CD8-positive, alpha-beta T cell (primary cell): ENCODE measurements at regions of chr1 and their contacts with region 1.

Region 1: DNA sequence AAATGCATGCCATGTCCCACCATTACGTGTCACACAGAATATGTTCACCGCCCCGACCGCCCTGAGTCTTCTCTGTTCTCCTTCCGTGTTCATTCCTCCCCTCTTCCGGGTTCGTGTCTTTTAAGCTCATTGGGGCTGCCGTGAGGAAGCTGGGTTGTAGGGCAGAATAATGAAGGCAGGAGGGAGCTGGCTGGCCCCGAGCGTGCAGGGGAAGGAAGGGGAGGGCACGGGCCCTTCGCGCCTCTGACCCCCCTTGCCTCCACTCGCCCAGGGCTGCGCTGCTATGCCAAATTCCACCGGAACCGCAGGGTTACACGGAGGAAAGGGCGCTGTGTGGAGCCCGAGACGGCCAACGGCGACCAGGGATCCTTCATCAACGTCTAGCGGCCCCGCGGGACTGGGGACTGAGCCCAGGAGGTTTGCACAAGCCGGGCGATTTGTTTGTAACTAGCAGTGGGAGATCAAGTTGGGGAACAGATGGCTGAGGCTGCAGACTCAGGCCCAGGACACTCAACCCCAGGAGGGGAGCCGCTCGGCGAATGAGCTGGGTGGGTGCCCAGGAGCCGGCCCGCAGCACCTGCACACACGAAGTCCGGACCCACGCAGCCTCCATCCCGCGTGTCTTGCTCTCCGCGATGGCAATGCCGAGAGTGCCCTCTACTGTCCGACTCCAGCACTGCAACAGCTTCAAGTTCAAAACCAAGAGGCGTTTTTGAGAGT is 16.5 kb upstream of the AGTRAP start:
- DNase-seq: peak; percentile 73 to 94 (median 90)
- ATAC-seq: peak; percentile 87
- H3K4me3 ChIP-seq: peak overlapping the region; percentile 51 to 66
- H3K4me3 Mint-ChIP-seq: peak overlapping the region; percentile 88
- H3K27ac ChIP-seq: peak overlapping the region; percentile 52 to 74
- H3K27ac Mint-ChIP-seq: peak overlapping the region; percentile 91
- H3K4me1 ChIP-seq: peaks cover 15% of the 10 kb centered on the region
- H3K4me1 Mint-ChIP-seq: peaks cover 13% of the 10 kb centered on the region
- H3K27me3 ChIP-seq: no peaks in the 10 kb centered on the region
- H3K27me3 Mint-ChIP-seq: no peaks in the 10 kb centered on the region
- CTCF ChIP-seq: peak; percentile 96

Region 2: DNA sequence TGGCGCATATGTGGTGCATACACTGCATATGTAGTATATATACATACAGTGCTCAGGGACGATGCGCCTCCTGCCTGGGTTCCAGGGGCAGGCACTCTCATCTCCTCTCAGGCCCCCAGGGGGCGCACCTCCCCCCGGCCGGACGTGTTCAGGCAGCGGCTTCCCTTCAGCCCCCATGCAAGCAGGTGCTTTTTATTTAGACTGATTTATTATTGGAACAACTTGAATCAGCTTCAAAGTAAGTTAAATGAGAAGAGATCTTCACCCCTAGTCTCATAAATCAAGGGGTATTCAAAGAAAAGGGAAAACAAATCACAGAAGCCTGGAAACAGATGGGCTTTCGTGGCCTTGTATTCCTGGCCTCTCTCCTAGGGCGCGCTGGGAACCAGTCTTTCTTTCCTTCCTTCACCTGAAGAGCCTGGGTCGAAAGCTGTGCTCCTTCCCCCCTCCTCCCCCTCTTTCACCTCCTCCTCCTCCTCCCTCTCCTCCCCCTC is 381.8 kb before region 1 on chr1:
- CTCF ChIA-PET with region 1: no interaction called
- POLR2A ChIA-PET with region 1: no interaction called
- intact Hi-C with region 1: loop called (anchors 1 kb)
- DNase-seq: peak; percentile 47 to 85 (median 70)
- ATAC-seq: peak; percentile 74
- H3K4me3 ChIP-seq: no peak overlapping the region
- H3K4me3 Mint-ChIP-seq: no peak overlapping the region
- H3K27ac ChIP-seq: no peak overlapping the region
- H3K27ac Mint-ChIP-seq: no peak overlapping the region
- H3K4me1 ChIP-seq: peaks cover 6% of the 10 kb centered on the region
- H3K4me1 Mint-ChIP-seq: peaks cover 13% of the 10 kb centered on the region
- H3K27me3 ChIP-seq: no peaks in the 10 kb centered on the region
- H3K27me3 Mint-ChIP-seq: peaks cover 11% of the 10 kb centered on the region
- CTCF ChIP-seq: peak; percentile 83

Region 3: DNA sequence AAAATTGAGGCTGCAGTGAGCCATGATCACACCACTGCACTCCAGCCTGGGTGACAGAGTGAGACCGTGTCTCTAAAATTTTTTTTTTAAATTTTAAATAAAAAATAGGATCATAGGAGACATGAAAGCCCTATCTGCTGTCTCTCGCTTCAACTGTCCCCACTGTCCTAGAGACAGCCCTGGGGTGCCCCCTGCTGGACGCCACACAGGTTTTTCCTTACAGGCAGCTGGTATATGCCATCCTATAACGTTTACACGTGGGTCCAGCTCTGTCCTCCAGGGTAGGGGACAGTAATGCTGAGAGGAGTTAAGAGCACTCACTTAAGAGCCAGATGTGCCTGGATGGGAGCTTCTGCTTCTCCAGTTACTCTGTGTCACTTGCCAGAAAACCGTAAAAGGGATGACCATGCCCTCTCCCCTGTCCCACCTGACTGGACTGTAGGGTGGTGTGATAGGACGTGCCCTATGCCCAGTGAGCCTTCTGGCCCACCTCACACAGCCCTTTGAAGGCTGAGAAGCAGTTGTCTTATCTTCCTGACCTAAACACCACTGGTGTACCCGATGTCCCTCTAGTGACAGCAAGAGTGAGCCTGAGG is 73.7 kb before region 1 on chr1:
- CTCF ChIA-PET with region 1: interaction called, 69 read pairs
- POLR2A ChIA-PET with region 1: interaction called, 62 read pairs
- intact Hi-C with region 1: loop called (anchors 1 kb)
- DNase-seq: peak; percentile 57 to 85 (median 81)
- ATAC-seq: peak; percentile 47
- H3K4me3 ChIP-seq: no peak overlapping the region
- H3K4me3 Mint-ChIP-seq: no peak overlapping the region
- H3K27ac ChIP-seq: no peak overlapping the region
- H3K27ac Mint-ChIP-seq: no peak overlapping the region
- H3K4me1 ChIP-seq: peaks cover 17% of the 10 kb centered on the region
- H3K4me1 Mint-ChIP-seq: peaks cover 15% of the 10 kb centered on the region
- H3K27me3 ChIP-seq: no peaks in the 10 kb centered on the region
- H3K27me3 Mint-ChIP-seq: no peaks in the 10 kb centered on the region
- CTCF ChIP-seq: peak; percentile 85

Region 4: GRCh38 chr1:11661103-11661502 is 58.4 kb before region 1 on chr1:
- CTCF ChIA-PET with region 1: interaction called, 54 read pairs
- POLR2A ChIA-PET with region 1: interaction called, 38 read pairs
- intact Hi-C with region 1: loop called (anchors 1 kb)
- DNase-seq: no peak
- ATAC-seq: no peak
- H3K4me3 ChIP-seq: no peak overlapping the region
- H3K4me3 Mint-ChIP-seq: no peak overlapping the region
- H3K27ac ChIP-seq: no peak overlapping the region
- H3K27ac Mint-ChIP-seq: no peak overlapping the region
- H3K4me1 ChIP-seq: peaks cover 6% of the 10 kb centered on the region
- H3K4me1 Mint-ChIP-seq: peaks cover 5% of the 10 kb centered on the region
- H3K27me3 ChIP-seq: no peaks in the 10 kb centered on the region
- H3K27me3 Mint-ChIP-seq: no peaks in the 10 kb centered on the region
- CTCF ChIP-seq: no peak

Region 5: GRCh38 chr1:11707621-11708276 is 11.7 kb before region 1 on chr1:
- CTCF ChIA-PET with region 1: interaction called, 11 read pairs
- POLR2A ChIA-PET with region 1: no interaction called
- intact Hi-C with region 1: no loop called
- DNase-seq: no peak
- ATAC-seq: no peak
- H3K4me3 ChIP-seq: no peak overlapping the region
- H3K4me3 Mint-ChIP-seq: no peak overlapping the region
- H3K27ac ChIP-seq: no peak overlapping the region
- H3K27ac Mint-ChIP-seq: no peak overlapping the region
- H3K4me1 ChIP-seq: no peaks in the 10 kb centered on the region
- H3K4me1 Mint-ChIP-seq: no peaks in the 10 kb centered on the region
- H3K27me3 ChIP-seq: no peaks in the 10 kb centered on the region
- H3K27me3 Mint-ChIP-seq: no peaks in the 10 kb centered on the region
- CTCF ChIP-seq: no peak

Region 6: GRCh38 chr1:11735854-11736745 is 16.6 kb after region 1 on chr1 and contains the start of gene AGTRAP:
- CTCF ChIA-PET with region 1: interaction called, 8 read pairs
- POLR2A ChIA-PET with region 1: interaction called, 17 read pairs
- intact Hi-C with region 1: loop called in 1 of 2 experiments (anchors 2 kb)
- DNase-seq: peak; percentile 74 to 94 (median 86)
- ATAC-seq: peak; percentile 65
- H3K4me3 ChIP-seq: peak within 1 kb of the TSS; percentile 87 to 90
- H3K4me3 Mint-ChIP-seq: peak within 1 kb of the TSS; percentile 91
- H3K27ac ChIP-seq: peak within 1 kb of the TSS; percentile 50 to 74
- H3K27ac Mint-ChIP-seq: peak within 1 kb of the TSS; percentile 65
- H3K4me1 ChIP-seq: peaks cover 50% of the 10 kb centered on the region
- H3K4me1 Mint-ChIP-seq: peaks cover 69% of the 10 kb centered on the region
- H3K27me3 ChIP-seq: no peaks in the 10 kb centered on the region
- H3K27me3 Mint-ChIP-seq: no peaks in the 10 kb centered on the region
- CTCF ChIP-seq: no peak
- total RNA-seq, gene AGTRAP: 10.4 to 10.9 TPM